Panc1 (cell line): ENCODE measurements at regions of chr7 and their contacts with region 1.

Region 1: DNA sequence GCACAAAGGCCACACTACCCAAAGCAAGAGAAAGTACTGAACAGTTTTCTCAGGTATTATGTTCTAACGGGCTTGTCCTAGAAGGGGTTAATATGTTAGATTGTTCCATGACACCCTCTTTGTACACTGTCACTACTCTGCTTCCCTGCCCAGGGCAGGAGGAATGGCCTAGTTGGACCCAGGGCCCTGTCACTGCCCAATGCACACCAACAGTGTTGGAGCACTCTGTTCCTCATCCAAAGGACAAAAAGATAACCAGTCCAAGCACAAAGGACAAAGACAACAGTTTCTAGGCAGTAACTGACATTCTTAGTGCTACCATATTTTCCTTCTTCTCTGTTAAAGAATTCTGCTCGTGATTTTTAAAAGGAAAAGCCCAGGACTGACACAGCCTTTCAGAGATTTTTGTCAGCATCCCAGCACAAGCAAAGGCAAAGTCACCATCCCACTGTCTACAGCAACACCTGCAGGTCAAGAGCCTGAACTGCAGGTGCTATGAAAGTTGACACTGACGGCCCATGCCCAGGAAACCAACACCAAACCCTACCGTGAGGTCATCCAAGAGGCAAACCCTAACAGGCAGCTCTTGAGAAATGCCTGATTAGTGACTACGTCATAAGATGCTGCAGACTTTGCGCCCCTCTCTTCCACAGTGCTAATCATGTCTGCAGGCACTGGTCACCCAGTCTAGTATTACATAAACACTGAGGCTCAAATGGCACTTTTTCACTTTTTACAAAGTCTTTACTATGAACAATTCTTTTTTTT is 13.2 kb downstream of the NUDCD3 start:
- DNase-seq: peak; percentile 71
- ATAC-seq: peak; percentile 93
- H3K4me3 ChIP-seq: no peak overlapping the region
- H3K27ac ChIP-seq: no peak overlapping the region
- H3K4me1 ChIP-seq: peaks cover 10% of the 10 kb centered on the region
- H3K27me3 ChIP-seq: no peaks in the 10 kb centered on the region
- CTCF ChIP-seq: peak; percentile 93

Region 2: DNA sequence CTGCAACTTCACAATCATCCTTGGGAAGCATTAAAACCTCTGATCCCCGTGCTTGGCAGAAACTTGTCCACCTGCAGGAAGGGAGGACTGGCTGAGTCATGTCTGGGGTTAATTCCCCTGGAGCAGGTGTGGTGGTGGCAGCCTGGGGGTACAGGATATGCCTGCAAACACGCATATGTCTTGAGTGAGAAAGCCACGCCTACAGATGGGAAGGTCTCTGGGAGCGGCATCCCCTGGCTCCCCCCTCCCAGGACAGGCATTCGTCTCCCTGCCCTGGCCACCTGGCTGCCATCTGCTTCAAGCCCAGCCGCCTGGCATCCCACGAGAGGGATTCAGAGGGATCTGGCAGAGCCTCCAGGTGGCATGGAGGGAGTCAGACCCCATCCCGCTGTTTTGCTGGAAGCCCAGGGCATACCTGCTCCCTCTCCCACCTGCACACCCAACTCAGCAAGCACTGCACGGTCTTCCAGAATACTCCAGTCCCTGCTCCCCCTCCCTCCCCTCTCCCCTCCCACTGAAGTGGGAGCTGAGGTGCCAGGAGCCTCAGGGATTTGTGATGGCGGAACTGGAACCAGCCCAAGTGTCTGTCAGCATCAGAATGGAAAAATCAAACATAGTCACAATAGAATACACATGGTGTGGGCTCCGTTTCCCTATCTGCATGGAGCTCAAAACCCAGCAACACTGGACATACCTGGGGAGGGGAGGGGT is 212.9 kb before region 1 on chr7:
- CTCF ChIA-PET with region 1: no interaction called
- POLR2A ChIA-PET with region 1: no interaction called
- in situ Hi-C with region 1: no loop called
- intact Hi-C with region 1: no loop called
- DNase-seq: no peak
- ATAC-seq: no peak
- H3K4me3 ChIP-seq: no peak overlapping the region
- H3K27ac ChIP-seq: no peak overlapping the region
- H3K4me1 ChIP-seq: no peaks in the 10 kb centered on the region
- H3K27me3 ChIP-seq: peaks cover 3% of the 10 kb centered on the region; the same call in 1 of the 2 replicates
- CTCF ChIP-seq: no peak

Region 3: DNA sequence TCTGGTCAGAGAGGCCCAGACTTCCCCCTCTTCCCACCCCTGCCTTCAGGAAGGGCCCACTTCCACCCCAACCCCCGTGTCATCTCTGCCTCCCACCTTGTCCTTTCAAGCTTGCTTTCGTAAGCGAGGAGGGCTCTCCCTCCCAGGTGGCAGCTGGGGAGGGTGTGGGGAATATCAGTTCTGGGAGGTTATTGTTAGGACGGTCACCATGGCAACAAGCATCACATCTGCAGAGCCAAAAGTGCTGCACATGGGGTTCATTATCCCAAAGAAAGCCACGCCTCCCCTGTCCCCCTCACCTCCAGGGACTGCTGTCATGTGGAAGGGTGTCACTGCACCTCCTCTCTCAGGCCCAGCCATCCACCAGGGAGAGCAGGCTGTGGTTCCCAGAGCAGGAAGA is 149.3 kb before region 1 on chr7:
- CTCF ChIA-PET with region 1: no interaction called
- POLR2A ChIA-PET with region 1: interaction called, 16 read pairs
- in situ Hi-C with region 1: no loop called
- intact Hi-C with region 1: no loop called
- DNase-seq: no peak
- ATAC-seq: no peak
- H3K4me3 ChIP-seq: no peak overlapping the region
- H3K27ac ChIP-seq: no peak overlapping the region
- H3K4me1 ChIP-seq: no peaks in the 10 kb centered on the region
- H3K27me3 ChIP-seq: peaks cover 9% of the 10 kb centered on the region
- CTCF ChIP-seq: no peak

Region 4: DNA sequence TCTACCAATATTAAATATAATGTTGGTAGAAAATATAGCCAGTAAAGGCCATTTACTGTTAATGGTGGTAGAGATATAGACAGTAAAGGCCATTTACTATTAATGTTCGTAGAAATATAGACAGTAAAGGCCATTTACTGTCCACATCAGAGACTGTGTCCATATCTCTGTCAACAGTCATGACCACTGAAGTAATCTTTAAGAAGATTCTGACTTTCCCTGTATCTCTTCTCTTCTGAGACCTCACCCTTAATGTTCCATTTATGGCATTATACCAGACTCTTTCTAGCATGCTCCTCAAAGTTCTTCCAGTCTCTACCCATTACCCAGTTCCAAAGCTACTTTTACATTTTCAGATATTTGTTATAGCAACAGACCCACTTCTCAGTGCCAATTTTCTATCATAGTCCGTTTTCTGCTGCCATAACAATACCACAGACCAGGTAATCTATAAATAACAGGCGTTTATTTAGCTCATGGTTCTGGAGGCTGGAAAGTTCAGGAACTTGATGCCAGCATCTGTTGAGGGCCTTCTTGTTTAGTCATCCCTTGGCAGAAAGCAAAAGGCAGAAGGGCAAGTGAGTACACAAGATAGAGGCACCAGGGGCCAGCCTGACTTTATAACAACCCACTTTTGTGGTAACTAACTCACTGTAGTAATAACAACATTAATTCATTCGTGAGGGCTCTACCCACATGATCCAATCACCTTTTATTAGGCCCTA is 21.1 kb after region 1 on chr7:
- CTCF ChIA-PET with region 1: no interaction called
- POLR2A ChIA-PET with region 1: no interaction called
- in situ Hi-C with region 1: no loop called
- intact Hi-C with region 1: no loop called
- DNase-seq: no peak
- ATAC-seq: no peak
- H3K4me3 ChIP-seq: no peak overlapping the region
- H3K27ac ChIP-seq: no peak overlapping the region
- H3K4me1 ChIP-seq: no peaks in the 10 kb centered on the region
- H3K27me3 ChIP-seq: no peaks in the 10 kb centered on the region; the same call in 1 of the 2 replicates
- CTCF ChIP-seq: no peak